ENCODE measurements at regions of chr6 and their contacts with region 1.

Region 1: DNA sequence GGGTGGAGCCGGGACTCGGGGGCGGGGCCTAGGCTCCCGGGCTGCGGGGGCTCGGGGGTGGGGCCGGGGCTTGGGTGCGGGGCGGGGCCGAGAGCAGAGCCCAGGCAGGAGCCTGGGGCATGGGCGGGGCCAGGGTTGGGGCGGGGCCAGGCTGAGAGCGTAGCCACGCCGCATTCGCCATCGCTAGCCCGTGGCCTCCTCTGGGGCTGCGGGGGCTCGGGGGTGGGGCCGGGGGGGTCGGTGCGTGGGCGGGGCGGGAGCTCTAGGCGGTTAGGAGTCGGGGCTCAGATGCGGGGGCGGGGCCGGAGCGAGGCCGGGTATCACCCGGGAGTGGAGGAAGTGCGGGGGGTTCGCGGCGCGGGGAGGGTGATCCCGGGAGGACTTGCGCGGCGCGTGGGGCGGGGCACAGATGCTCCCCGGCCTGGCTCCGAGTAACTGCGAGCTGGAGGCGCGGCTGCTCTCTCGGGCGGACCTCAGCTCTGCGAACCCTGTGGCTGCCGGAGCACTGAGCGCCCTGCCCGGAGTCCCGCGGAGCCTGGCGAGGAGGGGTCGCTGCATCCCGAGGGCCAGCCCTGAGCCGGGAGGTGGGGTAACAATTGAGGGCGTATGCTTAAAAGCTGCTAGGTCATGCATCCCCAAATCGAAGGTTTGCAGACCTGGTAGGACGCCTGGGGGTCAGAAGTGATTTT is 434 bp upstream of the ECI2 start:
- DNase-seq: peak; percentile 93 to 94
- ATAC-seq: peak; percentile 78 to 79
- H3K4me3 ChIP-seq: peak overlapping the region; percentile 80 to 99 (median 88)
- H3K27ac ChIP-seq: peak overlapping the region; percentile 90 to 98 (median 95)
- H3K4me1 ChIP-seq: peaks cover 19 to 29% of the 10 kb centered on the region in 2 donors
- H3K27me3 ChIP-seq: no peaks in the 10 kb centered on the region
- CTCF ChIP-seq: no peak
- POLR2A ChIP-seq: peak; percentile 53 to 59

Region 2: GRCh38 chr6:3635482-3635881 is 500.3 kb before region 1 on chr6:
- in situ Hi-C with region 1: no loop called
- intact Hi-C with region 1: no loop called
- DNase-seq: no peak
- ATAC-seq: peak in 1 of 2 donors; percentile 36
- H3K4me3 ChIP-seq: no peak overlapping the region
- H3K27ac ChIP-seq: no peak overlapping the region
- H3K4me1 ChIP-seq: no peaks in the 10 kb centered on the region
- H3K27me3 ChIP-seq: no peaks in the 10 kb centered on the region
- CTCF ChIP-seq: no peak
- POLR2A ChIP-seq: no peak

Region 3: GRCh38 chr6:3697609-3698008 is 438.2 kb before region 1 on chr6:
- in situ Hi-C with region 1: no loop called
- intact Hi-C with region 1: no loop called
- DNase-seq: no peak
- ATAC-seq: peak; percentile 53 to 83
- H3K4me3 ChIP-seq: no peak overlapping the region
- H3K27ac ChIP-seq: no peak overlapping the region
- H3K4me1 ChIP-seq: no peaks in the 10 kb centered on the region
- H3K27me3 ChIP-seq: no peaks in the 10 kb centered on the region
- CTCF ChIP-seq: no peak
- POLR2A ChIP-seq: no peak

Region 4: DNA sequence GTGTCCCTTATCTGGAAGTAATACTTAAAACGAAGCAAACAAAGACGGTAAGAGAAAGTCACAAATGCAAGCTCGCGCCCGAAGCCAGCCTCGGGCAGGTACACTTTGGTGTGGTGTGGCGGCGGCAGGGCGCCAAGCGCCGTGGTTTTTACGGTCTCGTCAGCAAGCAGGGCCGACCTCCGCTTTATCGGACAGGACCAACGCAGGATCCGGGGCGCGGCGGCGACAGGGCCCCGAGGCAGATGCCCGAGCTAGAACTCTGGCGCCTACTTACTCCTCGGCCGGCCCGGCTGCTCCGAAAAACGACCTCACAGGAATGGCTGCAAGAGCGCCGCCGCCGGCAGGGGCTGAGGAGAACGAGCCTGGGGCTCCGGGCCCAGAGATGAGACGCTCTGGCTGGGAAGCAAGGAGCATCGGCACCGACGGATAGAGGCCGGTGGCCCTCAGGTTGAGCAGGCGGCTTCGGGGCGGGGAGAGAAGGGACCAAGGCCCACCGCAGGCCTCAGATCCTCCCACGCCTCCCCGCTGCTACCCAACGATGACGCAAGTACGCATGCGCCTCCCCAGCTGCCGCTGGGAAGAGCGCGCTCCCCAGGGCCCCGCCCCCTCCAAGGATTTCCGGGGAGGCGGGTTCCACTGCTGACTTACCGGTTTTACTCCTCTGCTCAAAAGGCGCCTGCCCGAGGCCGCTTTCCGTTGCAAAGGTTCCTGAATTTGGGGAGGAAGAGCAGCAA is 117.5 kb before region 1 on chr6:
- in situ Hi-C with region 1: no loop called
- intact Hi-C with region 1: loop called (anchors 1 kb)
- DNase-seq: peak; percentile 89 to 91
- ATAC-seq: peak; percentile 71 to 73
- H3K4me3 ChIP-seq: peak overlapping the region; percentile 83 to 90 (median 86)
- H3K27ac ChIP-seq: peak overlapping the region; percentile 96 to 98 (median 97)
- H3K4me1 ChIP-seq: peaks cover 34 to 48% of the 10 kb centered on the region in 2 donors
- H3K27me3 ChIP-seq: no peaks in the 10 kb centered on the region
- CTCF ChIP-seq: peak; percentile 51 to 60 (median 55)
- POLR2A ChIP-seq: peak; percentile 89 to 94

Region 5: DNA sequence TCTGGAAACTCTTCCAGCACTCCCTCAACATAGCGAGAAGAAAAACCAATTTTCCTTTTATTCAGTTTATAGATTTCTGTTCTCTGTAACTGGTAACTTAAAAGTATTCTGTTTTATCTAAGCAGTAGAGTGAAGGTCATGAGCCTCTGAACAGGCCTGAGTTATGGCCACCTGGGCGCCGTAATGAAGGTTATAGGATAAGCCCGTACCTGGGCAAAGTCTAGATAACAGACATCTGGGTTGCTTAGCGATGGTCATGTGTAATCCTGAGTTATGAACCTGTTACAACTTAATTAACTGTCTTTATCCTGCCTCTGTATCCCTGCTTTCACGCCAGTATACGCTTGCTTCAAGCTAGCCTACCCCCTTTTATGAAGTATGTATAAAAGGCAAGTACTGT is 43.9 kb before region 1 on chr6:
- in situ Hi-C with region 1: no loop called
- intact Hi-C with region 1: no loop called
- DNase-seq: no peak
- ATAC-seq: no peak
- H3K4me3 ChIP-seq: no peak overlapping the region
- H3K27ac ChIP-seq: no peak overlapping the region
- H3K4me1 ChIP-seq: no peaks in the 10 kb centered on the region
- H3K27me3 ChIP-seq: no peaks in the 10 kb centered on the region
- CTCF ChIP-seq: no peak
- POLR2A ChIP-seq: no peak

Region 6: GRCh38 chr6:4102687-4103244 is 33.0 kb before region 1 on chr6:
- in situ Hi-C with region 1: no loop called
- intact Hi-C with region 1: loop called (anchors 2 kb)
- DNase-seq: no peak
- ATAC-seq: peak in 1 of 2 donors; percentile 75
- H3K4me3 ChIP-seq: no peak overlapping the region
- H3K27ac ChIP-seq: peak overlapping the region; percentile 55 to 77 (median 66)
- H3K4me1 ChIP-seq: peaks cover 29 to 43% of the 10 kb centered on the region in 2 donors
- H3K27me3 ChIP-seq: no peaks in the 10 kb centered on the region
- CTCF ChIP-seq: no peak
- POLR2A ChIP-seq: no peak

Region 7: GRCh38 chr6:4155848-4156466 is 20.1 kb after region 1 on chr6:
- in situ Hi-C with region 1: no loop called
- intact Hi-C with region 1: loop called (anchors 2 kb)
- DNase-seq: peak; percentile 70 to 79
- ATAC-seq: peak; percentile 93 to 94
- H3K4me3 ChIP-seq: peak overlapping the region in 1 of 4 donors; percentile 10
- H3K27ac ChIP-seq: no peak overlapping the region
- H3K4me1 ChIP-seq: no peaks in the 10 kb centered on the region
- H3K27me3 ChIP-seq: no peaks in the 10 kb centered on the region
- CTCF ChIP-seq: peak; percentile 74 to 92 (median 86)
- POLR2A ChIP-seq: no peak

Measured in gastrocnemius medialis (tissue), 4 donors.